Left ventricle myocardium superior (tissue), 1 donor: ENCODE measurements at regions of chr1 and their contacts with region 1.

Region 1: GRCh38 chr1:52296345-52296744 is 69.7 kb downstream of the CC2D1B start:
- DNase-seq: no peak
- ATAC-seq: peak; percentile 51

Region 2: DNA sequence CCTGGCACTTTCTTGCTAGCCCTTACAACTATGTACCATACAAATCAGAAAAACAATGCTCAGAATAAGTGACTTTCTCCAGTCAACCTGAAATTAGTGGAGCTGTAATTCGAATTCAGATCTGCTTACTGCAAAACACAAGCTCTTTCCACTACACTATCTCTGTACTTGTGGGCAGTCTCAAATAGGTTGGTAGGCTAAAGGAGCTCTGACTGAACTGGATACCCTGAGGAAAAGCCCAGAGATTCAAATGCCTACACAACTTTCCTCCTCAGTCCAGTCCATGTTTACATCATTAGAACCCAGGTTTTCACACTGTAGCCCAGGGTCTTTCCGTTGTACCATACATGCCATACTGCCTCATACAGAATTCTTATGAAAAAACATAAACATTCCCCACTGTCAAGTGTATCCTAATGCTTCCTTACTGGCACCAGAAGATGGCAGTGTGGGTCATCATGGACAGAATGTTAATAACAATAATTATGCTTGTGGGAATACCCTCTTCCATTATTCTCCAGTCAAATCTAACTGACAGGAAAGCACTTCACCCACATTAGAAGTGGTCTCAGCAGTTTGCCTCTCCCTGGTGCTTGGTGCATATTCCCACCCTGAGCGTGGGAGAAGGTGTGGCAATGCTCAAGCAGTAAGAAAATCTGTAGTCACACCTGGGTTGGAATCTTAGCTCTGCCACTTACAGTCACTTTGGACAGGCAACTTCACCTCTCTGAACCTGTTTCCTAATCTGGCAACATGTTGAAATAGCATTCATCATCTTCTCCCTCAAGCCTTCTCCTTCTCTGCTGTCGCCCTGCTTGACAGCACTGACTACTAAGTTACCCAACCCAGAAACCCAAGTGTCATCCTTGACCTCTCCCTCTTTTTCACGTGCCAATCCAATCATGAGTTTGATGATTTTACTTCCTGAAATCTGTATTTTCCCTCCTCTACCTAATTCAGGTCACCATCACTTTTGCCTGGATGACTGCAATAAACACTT is 168.9 kb before region 1 on chr1:
- intact Hi-C with region 1: loop called (anchors 5 kb)
- DNase-seq: no peak
- ATAC-seq: peak; percentile 56

Region 3: GRCh38 chr1:52460694-52461093 is 164.3 kb after region 1 on chr1:
- intact Hi-C with region 1: no loop called
- DNase-seq: no peak
- ATAC-seq: no peak